CD14-positive monocyte (primary cell): ENCODE measurements at regions of chr1 and their contacts with region 1.

Region 1: DNA sequence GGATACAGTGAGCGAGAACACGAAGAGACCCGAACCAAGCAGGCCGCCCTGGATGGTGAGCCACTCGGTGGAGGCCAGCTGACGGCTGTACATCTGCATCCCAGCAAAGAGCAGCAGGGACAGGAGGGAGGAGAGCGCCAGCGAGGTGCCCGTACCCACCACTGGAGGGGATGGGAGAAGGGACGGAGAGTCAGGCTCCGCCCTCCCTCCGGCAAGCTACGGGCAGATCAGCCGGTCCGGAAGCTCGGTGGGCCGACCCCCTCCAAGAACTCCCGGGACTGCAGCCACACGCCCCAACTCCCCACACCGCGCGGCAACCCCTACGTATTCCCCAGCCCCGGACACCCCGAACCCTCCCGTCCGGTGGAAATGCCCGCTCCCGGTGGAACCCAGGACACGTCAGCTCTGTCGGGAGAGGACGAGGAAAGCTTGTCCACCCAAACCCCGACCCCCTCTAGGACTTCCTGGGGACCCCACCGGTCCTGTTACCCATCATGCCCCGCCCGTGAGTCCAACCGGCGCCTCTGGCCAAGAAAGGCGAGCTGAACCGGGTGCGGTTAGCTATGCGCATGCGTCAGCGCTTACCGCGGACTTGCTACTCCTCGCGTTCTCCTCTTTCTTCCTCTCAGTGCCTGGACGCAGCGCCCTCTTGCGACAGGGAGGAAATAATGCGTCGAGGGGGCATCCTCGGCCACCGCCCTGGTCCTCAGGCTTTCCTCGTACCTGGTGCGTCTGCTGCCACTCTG is at the start of gene KRTCAP2:
- DNase-seq: peak; percentile 93 to 98 (median 95)
- H3K4me3 ChIP-seq: peak within 1 kb of the TSS; percentile 70 to 95 (median 91)
- H3K4me3 Mint-ChIP-seq: peak within 1 kb of the TSS; percentile 93 to 96
- H3K27ac ChIP-seq: peak within 1 kb of the TSS; percentile 69 to 90
- H3K27ac Mint-ChIP-seq: peak within 1 kb of the TSS; percentile 84 to 96 (median 93)
- H3K4me1 ChIP-seq: peaks cover 29 to 37% of the 10 kb centered on the region in 2 donors
- H3K4me1 Mint-ChIP-seq: peaks cover 36% of the 10 kb centered on the region
- H3K27me3 ChIP-seq: no peaks in the 10 kb centered on the region
- H3K27me3 Mint-ChIP-seq: peaks cover 4 to 22% (median 21%) of the 10 kb centered on the region in 3 donors
- CTCF ChIP-seq: peak; percentile 95
- polyA plus RNA-seq, gene KRTCAP2: 157 to 256 (median 247) TPM

Region 2: DNA sequence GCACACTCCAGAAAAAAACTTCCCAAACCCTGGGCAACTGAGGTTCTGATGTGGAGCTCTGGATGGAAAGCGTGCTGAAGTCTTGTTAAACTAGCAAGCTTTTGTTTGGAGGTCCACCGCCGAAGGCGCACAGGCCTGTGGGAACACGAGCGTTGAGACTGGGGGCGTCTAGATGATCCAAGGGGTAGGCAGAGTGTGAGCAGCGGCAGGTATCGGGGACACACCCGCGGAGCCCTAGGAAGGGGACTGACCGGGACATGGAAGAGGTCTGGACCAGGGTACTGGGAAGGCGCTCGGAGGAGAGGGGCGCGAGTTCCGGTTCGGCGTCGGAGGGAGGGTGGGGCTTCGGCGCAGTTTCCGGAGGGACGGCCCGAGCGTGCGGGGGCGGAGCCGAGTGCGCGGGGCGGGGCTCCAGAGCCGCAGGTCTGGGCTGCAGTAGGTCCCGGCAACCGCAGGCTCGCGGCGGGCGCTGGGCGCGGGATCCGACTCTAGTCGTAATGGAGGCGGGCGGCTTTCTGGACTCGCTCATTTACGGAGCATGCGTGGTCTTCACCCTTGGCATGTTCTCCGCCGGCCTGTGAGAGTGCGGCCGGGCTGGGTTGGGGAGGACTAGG is 37.4 kb before region 1 on chr1 and contains the start of gene SLC50A1:
- intact Hi-C with region 1: loop called in 1 of 2 experiments (anchors 5 kb)
- DNase-seq: peak; percentile 94 to 96 (median 94)
- H3K4me3 ChIP-seq: peak within 1 kb of the TSS; percentile 75 to 84 (median 79)
- H3K4me3 Mint-ChIP-seq: peak within 1 kb of the TSS; percentile 97 to 99
- H3K27ac ChIP-seq: peak within 1 kb of the TSS; percentile 97 to 99
- H3K27ac Mint-ChIP-seq: peak within 1 kb of the TSS; percentile 99 to 100 (median 100)
- H3K4me1 ChIP-seq: peaks cover 31 to 46% of the 10 kb centered on the region in 2 donors
- H3K4me1 Mint-ChIP-seq: peaks cover 43% of the 10 kb centered on the region
- H3K27me3 ChIP-seq: peaks cover under 1 to 9% of the 10 kb centered on the region in 2 donors
- H3K27me3 Mint-ChIP-seq: peaks cover 6 to 17% (median 16%) of the 10 kb centered on the region in 3 donors
- CTCF ChIP-seq: no peak
- polyA plus RNA-seq, gene SLC50A1: 40.0 to 50.8 (median 49.4) TPM

Region 3: DNA sequence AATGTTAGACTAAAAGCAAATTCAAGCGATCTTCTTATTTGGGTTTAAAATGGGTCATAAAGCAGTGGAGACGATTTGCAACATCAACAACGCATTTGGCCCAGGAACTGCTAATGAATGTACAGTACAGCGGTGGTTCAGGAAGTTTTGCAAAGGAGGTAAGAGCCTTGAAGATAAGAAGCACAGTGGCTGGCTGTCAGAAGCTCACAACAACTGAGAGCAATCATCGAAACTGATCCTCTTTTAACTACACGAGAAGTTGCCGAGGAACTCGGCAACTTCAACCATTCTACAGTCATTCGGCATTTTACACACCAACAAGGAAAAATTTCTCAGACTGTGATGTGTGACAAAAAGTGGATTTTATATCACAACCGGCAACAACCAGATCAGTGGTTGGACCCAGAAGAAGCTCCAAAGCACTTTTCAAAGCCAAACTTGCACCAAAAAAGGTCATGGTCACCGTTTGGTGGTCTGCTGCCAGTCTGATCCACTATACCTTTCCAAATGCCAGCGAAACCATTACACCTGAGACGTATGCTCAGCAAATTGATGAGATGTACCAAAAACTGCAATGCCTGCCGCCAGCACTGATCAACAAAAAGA is 341.8 kb after region 1 on chr1:
- intact Hi-C with region 1: no loop called
- DNase-seq: no peak
- H3K4me3 ChIP-seq: no peak overlapping the region
- H3K4me3 Mint-ChIP-seq: no peak overlapping the region
- H3K27ac ChIP-seq: peak overlapping the region in 1 of 2 donors; percentile 39
- H3K27ac Mint-ChIP-seq: peak overlapping the region in 4 of 7 donors; percentile 16 to 67 (median 48)
- H3K4me1 ChIP-seq: peaks cover 0 to 3% of the 10 kb centered on the region in 2 donors
- H3K4me1 Mint-ChIP-seq: peaks cover 28% of the 10 kb centered on the region
- H3K27me3 ChIP-seq: no peaks in the 10 kb centered on the region
- H3K27me3 Mint-ChIP-seq: peaks cover 0 to under 1% (median 0%) of the 10 kb centered on the region in 3 donors
- CTCF ChIP-seq: no peak